ENCODE measurements at regions of chr11 and their contacts with region 1.

Region 1: DNA sequence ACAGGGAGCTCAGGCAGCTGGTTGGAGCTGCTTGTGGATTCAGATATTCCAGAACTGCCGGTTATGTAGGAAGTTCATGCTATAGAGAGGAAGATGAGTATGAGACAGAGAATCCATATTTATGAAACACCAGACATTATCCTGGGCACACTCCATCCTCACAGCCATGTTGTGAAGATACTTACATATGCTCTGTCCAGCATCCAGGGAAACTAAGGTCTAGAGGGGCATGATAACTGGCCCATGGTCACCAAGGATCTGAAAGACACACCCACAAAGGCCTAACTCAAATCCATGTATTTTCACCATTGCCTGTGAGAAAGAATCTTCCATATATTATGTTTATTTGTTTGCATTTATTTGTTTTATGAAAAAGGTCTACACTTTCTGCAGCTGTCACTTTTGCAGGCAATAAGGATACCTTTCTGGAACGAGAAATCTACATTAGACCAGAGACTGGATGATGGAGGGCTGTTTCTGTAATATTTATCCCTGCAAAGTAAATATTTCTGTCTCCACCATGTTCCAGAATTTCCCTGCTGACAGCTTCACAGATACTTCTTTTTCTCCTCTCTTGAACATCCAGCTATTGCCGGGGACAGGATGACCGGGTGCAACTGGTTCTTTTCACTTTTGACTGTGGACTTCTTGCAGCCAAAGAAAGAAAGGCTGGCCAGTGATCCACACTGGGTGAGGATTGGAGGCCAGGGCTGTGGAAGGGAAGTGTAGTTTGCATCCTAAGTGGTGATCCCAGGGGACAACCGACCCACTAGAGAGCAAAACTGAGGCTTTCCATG is 145.9 kb upstream of the NAV2 start:
- DNase-seq: no peak
- ATAC-seq: no peak
- H3K4me3 ChIP-seq: no peak overlapping the region
- H3K27ac ChIP-seq: no peak overlapping the region
- H3K4me1 ChIP-seq: 0 out of 3 replicates have a peak, but pooled peaks cover 4% of the 10 kb centered on the region
- CTCF ChIP-seq: no peak
- EP300 ChIP-seq: no peak
- POLR2A ChIP-seq: no peak
- RAD21 ChIP-seq: no peak

Region 2: GRCh38 chr11:19577976-19578619 is 11.3 kb after region 1 on chr11:
- CTCF ChIA-PET with region 1: interaction called, 65 read pairs
- POLR2A ChIA-PET with region 1: no interaction called
- DNase-seq: no peak
- ATAC-seq: no peak
- H3K4me3 ChIP-seq: no peak overlapping the region
- H3K27ac ChIP-seq: no peak overlapping the region
- H3K4me1 ChIP-seq: no peaks in the 10 kb centered on the region
- CTCF ChIP-seq: no peak
- EP300 ChIP-seq: no peak
- POLR2A ChIP-seq: no peak
- RAD21 ChIP-seq: no peak

Region 3: GRCh38 chr11:19660076-19660475 is 93.3 kb after region 1 on chr11:
- CTCF ChIA-PET with region 1: interaction called, 31 read pairs
- POLR2A ChIA-PET with region 1: no interaction called
- DNase-seq: peak; percentile 72 to 81
- ATAC-seq: peak; percentile 80 to 88; a peak in 5 of 6 replicates
- H3K4me3 ChIP-seq: no peak overlapping the region
- H3K27ac ChIP-seq: peak overlapping the region; percentile 46 to 66
- H3K4me1 ChIP-seq: peaks cover 19% of the 10 kb centered on the region
- CTCF ChIP-seq: no peak
- EP300 ChIP-seq: no peak
- POLR2A ChIP-seq: no peak
- RAD21 ChIP-seq: no peak

Region 4: GRCh38 chr11:19735157-19735908 is 168.6 kb after region 1 on chr11:
- CTCF ChIA-PET with region 1: interaction called, 53 read pairs
- POLR2A ChIA-PET with region 1: no interaction called
- DNase-seq: no peak
- ATAC-seq: no peak
- H3K4me3 ChIP-seq: no peak overlapping the region
- H3K27ac ChIP-seq: no peak overlapping the region
- H3K4me1 ChIP-seq: 0 out of 3 replicates have a peak, but pooled peaks cover 3% of the 10 kb centered on the region
- CTCF ChIP-seq: no peak
- EP300 ChIP-seq: no peak
- POLR2A ChIP-seq: no peak
- RAD21 ChIP-seq: 0 out of 5 replicates have a peak, but pooled peaks of 1 of the 2 experiments have one; percentile 5

Measured in A549 (cell line).